ENCODE measurements at regions of chr17 and their contacts with region 1.

Region 1: DNA sequence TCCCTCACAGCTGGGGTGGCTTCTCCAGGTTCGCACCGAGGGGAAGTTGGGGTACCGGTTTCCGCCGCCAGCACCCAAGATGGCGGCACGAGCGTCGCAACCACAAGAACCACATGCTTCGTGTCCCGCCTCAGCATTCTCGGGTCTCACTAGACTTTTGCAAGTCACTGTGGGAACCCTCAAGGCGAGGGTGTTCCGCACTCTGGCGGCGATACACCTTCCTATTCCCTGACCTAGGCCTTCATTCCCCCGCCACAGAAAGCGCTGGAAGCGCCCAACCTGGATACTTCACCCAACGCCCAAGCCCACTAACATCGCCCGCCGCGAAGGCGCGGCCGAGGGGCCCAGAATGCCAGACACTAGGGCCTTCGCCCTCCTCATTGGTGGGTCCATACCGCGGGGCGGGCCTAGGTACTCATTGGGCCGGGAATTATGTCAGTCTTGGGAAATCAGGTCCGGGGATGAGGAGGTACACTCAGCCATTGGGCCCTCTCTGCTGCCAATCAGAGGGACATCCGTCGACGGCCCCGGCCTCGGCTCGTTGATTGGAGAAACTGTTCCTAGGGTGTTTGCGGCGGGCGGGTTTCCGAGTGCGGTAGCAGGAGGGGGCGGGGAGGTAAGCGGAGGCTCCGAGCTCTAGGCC is at the start of gene NFE2L1:
- DNase-seq: peak; percentile 97
- CTCF ChIP-seq: no peak

Region 2: GRCh38 chr17:47990962-47991731 is 56.7 kb before region 1 on chr17:
- CTCF ChIA-PET with region 1: no interaction called
- POLR2A ChIA-PET with region 1: no interaction called
- DNase-seq: no peak
- CTCF ChIP-seq: no peak

Region 3: DNA sequence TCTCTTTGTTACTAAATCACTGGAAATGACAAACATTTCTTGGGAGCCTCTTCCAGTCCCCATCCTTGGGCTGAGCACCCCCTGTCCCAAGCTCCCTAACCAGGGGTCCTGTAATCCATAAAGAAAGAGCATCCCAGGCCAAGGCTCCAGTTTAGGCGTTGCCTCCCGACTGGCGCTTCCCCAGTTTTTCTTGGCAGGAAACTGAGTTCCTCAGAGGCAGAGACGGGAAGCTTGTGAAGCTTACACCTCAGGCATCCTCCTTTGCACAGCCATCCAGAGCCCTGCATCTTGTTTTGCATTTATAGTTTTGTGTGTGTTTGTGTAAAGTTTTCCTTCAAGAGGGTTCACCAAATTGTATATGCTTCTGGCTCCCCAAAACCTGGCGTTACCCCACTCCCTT is 17.3 kb before region 1 on chr17:
- CTCF ChIA-PET with region 1: interaction called, 45 read pairs
- POLR2A ChIA-PET with region 1: interaction called, 5 read pairs
- DNase-seq: no peak
- CTCF ChIP-seq: no peak

Region 4: GRCh38 chr17:48037036-48037837 is 10.6 kb before region 1 on chr17 and contains the start of gene COPZ2:
- CTCF ChIA-PET with region 1: interaction called, 14 read pairs
- POLR2A ChIA-PET with region 1: no interaction called
- DNase-seq: peak; percentile 63
- CTCF ChIP-seq: peak; percentile 73

Region 5: DNA sequence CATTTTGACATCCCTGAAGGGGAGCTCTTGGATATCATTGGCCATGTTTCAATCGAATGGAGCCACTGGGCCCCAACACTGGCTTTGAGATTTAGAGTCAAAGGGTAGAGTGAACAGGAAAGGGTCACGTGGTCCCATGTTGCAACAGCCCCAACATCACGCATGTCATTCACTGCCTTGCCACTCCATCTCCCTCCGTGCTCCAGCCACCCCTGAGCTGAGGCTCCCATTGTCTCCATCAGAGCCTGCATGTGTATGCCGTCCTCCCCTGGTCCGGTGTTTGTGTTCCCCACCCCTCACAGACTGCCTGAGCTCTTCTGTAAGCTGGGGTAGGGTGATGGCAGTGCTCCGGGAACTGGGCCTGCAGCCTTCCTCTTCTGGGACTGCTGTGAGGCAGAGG is 12.4 kb after region 1 on chr17:
- CTCF ChIA-PET with region 1: interaction called, 10 read pairs
- POLR2A ChIA-PET with region 1: interaction called, 19 read pairs
- DNase-seq: no peak
- CTCF ChIP-seq: no peak

Region 6: DNA sequence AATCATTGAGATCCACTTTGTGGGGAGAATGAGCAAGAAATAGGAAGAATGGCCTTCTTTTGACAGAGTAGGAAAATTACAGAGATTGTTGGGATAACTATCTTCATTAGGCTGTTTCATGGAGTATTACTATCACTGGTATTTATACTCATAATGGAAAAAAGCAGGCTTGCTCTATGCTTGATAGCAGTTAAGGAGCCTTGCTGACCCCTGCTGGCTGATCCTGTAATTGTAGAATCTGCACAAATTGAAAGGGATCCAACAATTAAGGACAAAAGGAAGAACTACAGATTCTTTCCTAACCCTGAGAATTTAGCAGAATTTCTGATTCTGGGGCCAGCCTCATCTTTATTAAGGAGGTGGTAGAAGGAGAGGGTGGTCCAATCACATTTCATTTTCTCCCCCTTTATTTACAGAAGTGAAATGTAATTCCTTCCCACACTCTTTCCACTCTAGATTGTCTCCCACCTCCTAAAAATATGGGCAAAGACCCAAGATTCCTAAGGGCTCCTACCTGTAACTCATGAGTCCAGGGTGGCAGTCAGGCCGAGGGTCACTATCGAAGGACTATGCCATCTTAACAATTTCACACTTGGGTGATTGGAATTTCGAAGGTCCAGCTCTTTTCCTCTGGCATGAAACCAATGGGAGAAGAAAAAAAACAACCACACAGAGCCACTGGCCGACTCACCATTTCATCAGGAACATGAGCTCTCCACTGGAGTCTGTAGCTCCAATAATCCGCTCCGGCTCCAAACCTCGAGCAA is 26.6 kb after region 1 on chr17:
- CTCF ChIA-PET with region 1: interaction called, 16 read pairs
- POLR2A ChIA-PET with region 1: interaction called, 3 read pairs
- DNase-seq: peak; percentile 64
- CTCF ChIP-seq: peak; percentile 81

Region 7: GRCh38 chr17:48137656-48138055 is 89.8 kb after region 1 on chr17:
- CTCF ChIA-PET with region 1: no interaction called
- POLR2A ChIA-PET with region 1: no interaction called
- DNase-seq: no peak
- CTCF ChIP-seq: no peak